Activated B cell treated with CpG ODN at 0.5 μM for 24 hours (primary cell): ENCODE measurements at regions of chr6 and their contacts with region 1.

Region 1: DNA sequence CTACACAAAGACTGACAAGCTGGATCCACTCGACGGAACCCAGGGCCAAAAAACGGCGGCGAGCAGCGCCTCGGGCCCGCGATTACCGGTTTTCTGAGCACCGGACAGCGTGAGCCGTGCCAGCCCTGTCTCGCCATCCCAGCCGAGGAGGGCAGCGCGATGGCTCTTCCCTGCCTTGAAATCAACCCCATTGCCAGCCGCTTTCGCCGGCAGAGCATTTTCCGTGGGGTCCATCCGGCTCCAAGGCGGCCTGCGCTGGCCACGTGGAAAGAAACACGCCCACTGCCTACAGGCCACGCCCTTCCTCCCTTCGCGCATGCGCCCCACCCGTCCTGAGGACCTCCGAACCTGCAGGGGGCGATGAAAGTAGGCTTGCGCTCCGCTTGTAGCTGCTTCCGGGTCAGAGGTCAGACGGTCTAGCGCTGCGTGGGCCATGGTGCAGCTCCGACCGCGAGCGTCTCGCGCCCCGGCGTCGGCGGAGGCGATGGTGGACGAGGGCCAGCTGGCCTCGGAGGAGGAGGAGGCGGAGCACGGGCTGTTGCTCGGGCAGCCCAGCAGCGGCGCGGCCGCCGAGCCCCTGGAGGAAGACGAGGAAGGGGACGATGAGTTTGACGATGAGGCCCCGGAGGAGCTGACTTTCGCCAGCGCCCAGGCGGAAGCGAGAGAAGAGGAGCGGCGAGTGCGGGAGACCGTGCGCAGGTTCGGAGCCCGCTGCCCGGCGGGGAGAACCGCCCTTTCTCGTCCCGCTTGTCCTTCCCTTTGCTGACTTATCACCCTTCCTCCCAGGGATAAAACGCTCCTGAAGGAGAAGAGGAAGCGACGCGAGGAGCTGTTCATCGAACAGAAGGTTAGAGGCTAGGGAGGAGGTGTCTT is at the start of gene NOL7:
- DNase-seq: peak; percentile 98
- ATAC-seq: peak; percentile 91
- H3K4me3 Mint-ChIP-seq: peak within 1 kb of the TSS; percentile 98
- H3K27ac Mint-ChIP-seq: peak within 1 kb of the TSS; percentile 94
- H3K4me1 Mint-ChIP-seq: peaks cover 43% of the 10 kb centered on the region
- H3K27me3 Mint-ChIP-seq: no peaks in the 10 kb centered on the region
- CTCF ChIP-seq: peak; percentile 30
- total RNA-seq, gene NOL7: 67.5 and 74.4 TPM in 2 replicates

Region 2: DNA sequence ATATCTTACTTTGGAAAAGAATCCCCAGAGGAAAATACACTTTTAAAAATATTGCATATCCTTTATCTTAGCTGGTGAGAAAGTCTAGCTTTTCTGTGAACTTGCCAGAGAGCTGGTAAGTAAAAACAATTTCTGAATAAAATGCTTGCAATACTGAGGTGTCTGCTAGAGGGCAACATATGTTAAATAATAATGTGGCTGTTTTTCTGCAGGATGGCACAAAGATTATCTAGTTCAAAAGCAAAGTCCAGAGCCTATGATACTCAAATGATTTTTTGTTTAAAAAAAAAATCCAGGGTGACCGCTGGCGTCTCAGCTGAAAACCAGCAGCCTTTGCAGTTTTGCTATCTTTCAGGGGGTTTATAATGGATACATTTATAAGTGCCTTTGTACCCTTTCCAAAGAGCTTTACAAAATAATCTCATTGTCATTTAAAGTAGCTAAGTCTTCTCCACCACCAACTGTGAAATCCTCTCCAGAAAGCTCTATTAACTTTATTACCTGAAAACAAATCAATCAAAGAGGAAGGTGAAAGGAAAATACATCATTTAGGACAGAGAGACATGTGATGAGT is 703.7 kb before region 1 on chr6:
- CTCF ChIA-PET with region 1: no interaction called
- POLR2A ChIA-PET with region 1: no interaction called
- intact Hi-C with region 1: loop called (anchors 5 kb)
- DNase-seq: no peak
- ATAC-seq: no peak
- H3K4me3 Mint-ChIP-seq: no peak overlapping the region
- H3K27ac Mint-ChIP-seq: no peak overlapping the region
- H3K4me1 Mint-ChIP-seq: peaks cover 5% of the 10 kb centered on the region
- H3K27me3 Mint-ChIP-seq: no peaks in the 10 kb centered on the region
- CTCF ChIP-seq: no peak

Region 3: DNA sequence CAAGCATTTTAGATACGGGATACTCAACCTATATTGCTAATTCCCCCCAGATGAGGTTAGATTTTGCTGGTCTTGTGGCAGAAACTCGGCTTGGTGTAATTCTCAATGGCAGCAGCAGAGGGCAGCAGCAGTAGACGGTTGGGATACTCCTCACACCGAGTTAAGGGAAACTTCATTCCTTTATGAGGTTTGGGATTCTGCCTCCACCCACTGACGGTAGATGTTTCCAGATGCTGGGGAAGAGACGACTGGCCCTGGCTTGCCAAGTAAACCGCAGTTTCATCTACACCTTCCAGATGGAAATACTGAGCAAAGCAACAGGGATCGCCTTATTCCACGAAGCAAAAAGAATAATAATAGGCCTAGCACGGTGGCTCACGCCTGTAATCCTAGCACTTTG is 278.6 kb before region 1 on chr6:
- CTCF ChIA-PET with region 1: interaction called, 5 read pairs
- POLR2A ChIA-PET with region 1: interaction called, 11 read pairs
- intact Hi-C with region 1: loop called (anchors 2 kb)
- DNase-seq: peak; percentile 72
- ATAC-seq: peak; percentile 73
- H3K4me3 Mint-ChIP-seq: no peak overlapping the region
- H3K27ac Mint-ChIP-seq: no peak overlapping the region
- H3K4me1 Mint-ChIP-seq: peaks cover 51% of the 10 kb centered on the region
- H3K27me3 Mint-ChIP-seq: no peaks in the 10 kb centered on the region
- CTCF ChIP-seq: no peak

Region 4: DNA sequence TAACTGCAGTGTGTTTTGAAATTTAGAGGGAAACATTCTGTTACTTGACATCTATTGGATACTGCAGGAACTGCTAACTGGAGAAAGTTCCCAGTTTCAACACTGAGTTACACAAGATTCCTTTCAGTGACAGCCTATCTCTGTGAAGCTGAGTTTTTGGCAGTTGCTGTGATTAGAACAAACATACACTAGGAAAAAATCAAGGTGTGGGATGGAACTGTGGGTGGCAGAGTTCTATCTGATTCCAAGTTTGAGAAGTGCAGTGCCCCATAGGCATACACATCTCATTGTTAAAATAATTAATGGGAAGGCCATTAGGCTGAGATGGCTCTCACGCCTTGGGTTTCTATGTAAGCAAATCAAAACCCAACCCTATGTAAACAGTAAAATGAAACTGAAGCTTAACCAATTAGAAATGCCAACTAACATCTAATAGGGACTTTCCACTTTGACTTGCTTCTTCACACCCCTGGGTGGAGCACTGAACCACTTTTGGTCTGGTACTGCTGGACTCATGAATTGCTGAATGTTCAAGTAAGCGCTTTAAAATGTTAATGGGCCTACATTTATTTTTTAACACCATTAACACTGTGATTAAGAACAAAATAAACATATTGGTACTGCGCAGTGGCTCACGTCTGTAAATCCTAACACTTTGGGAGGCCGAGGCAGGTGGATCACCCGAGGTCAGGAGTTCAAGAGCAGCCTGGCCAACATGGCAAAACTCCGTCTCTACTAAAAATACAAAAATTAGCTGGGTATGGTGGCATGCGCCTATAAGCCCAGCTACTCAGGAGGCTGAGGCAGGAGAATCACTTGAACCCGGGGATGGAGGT is 231.6 kb before region 1 on chr6:
- CTCF ChIA-PET with region 1: interaction called, 3 read pairs
- POLR2A ChIA-PET with region 1: interaction called, 15 read pairs
- intact Hi-C with region 1: loop called (anchors 1 kb)
- DNase-seq: no peak
- ATAC-seq: peak; percentile 98
- H3K4me3 Mint-ChIP-seq: peak overlapping the region; percentile 44
- H3K27ac Mint-ChIP-seq: peak overlapping the region; percentile 82
- H3K4me1 Mint-ChIP-seq: peaks cover 73% of the 10 kb centered on the region
- H3K27me3 Mint-ChIP-seq: no peaks in the 10 kb centered on the region
- CTCF ChIP-seq: no peak

Region 5: GRCh38 chr6:13526727-13527670 is 88.2 kb before region 1 on chr6:
- CTCF ChIA-PET with region 1: interaction called, 4 read pairs
- POLR2A ChIA-PET with region 1: interaction called, 14 read pairs
- intact Hi-C with region 1: loop called (anchors 1 kb)
- DNase-seq: peak; percentile 41
- ATAC-seq: peak; percentile 90
- H3K4me3 Mint-ChIP-seq: peak overlapping the region; percentile 3
- H3K27ac Mint-ChIP-seq: peak overlapping the region; percentile 78
- H3K4me1 Mint-ChIP-seq: peaks cover 47% of the 10 kb centered on the region
- H3K27me3 Mint-ChIP-seq: no peaks in the 10 kb centered on the region
- CTCF ChIP-seq: no peak

Region 6: GRCh38 chr6:13711733-13712598 is 96.8 kb after region 1 on chr6 and contains the start of gene RANBP9:
- CTCF ChIA-PET with region 1: interaction called, 5 read pairs
- POLR2A ChIA-PET with region 1: interaction called, 34 read pairs
- intact Hi-C with region 1: loop called (anchors 1 kb)
- DNase-seq: peak; percentile 92
- ATAC-seq: peak; percentile 83
- H3K4me3 Mint-ChIP-seq: peak within 1 kb of the TSS; percentile 97
- H3K27ac Mint-ChIP-seq: peak within 1 kb of the TSS; percentile 99
- H3K4me1 Mint-ChIP-seq: peaks cover 44% of the 10 kb centered on the region
- H3K27me3 Mint-ChIP-seq: no peaks in the 10 kb centered on the region
- CTCF ChIP-seq: no peak
- total RNA-seq, gene RANBP9: 30.7 and 34.7 TPM in 2 replicates

Region 7: GRCh38 chr6:13814176-13814937 is 199.2 kb after region 1 on chr6 and contains the start of gene MCUR1:
- CTCF ChIA-PET with region 1: interaction called, 3 read pairs
- POLR2A ChIA-PET with region 1: interaction called, 16 read pairs
- intact Hi-C with region 1: loop called (anchors 1 kb)
- DNase-seq: peak; percentile 81
- ATAC-seq: peak; percentile 83
- H3K4me3 Mint-ChIP-seq: peak within 1 kb of the TSS; percentile 91
- H3K27ac Mint-ChIP-seq: peak within 1 kb of the TSS; percentile 87
- H3K4me1 Mint-ChIP-seq: peaks cover 32% of the 10 kb centered on the region
- H3K27me3 Mint-ChIP-seq: no peaks in the 10 kb centered on the region
- CTCF ChIP-seq: no peak
- total RNA-seq, gene MCUR1: 13.6 and 14.1 TPM in 2 replicates

Region 8: GRCh38 chr6:14316635-14317386 is 701.6 kb after region 1 on chr6:
- CTCF ChIA-PET with region 1: no interaction called
- POLR2A ChIA-PET with region 1: no interaction called
- intact Hi-C with region 1: no loop called
- DNase-seq: no peak
- ATAC-seq: no peak
- H3K4me3 Mint-ChIP-seq: peak overlapping the region; percentile 32
- H3K27ac Mint-ChIP-seq: peak overlapping the region; percentile 71
- H3K4me1 Mint-ChIP-seq: peaks cover 65% of the 10 kb centered on the region
- H3K27me3 Mint-ChIP-seq: no peaks in the 10 kb centered on the region
- CTCF ChIP-seq: no peak